Activated CD4-positive, alpha-beta memory T cell treated with anti-CD3 and anti-CD28 coated beads for 36 hours (primary cell): ENCODE measurements at regions of chrX and their contacts with region 1.

Region 1: GRCh38 chrX:25034889-25035288 is 19.1 kb upstream of the ARX start:
- DNase-seq: no peak
- H3K4me3 Mint-ChIP-seq: no peak overlapping the region
- H3K27ac Mint-ChIP-seq: no peak overlapping the region
- H3K4me1 Mint-ChIP-seq: no peaks in the 10 kb centered on the region
- H3K27me3 Mint-ChIP-seq: no peaks in the 10 kb centered on the region

Region 2: DNA sequence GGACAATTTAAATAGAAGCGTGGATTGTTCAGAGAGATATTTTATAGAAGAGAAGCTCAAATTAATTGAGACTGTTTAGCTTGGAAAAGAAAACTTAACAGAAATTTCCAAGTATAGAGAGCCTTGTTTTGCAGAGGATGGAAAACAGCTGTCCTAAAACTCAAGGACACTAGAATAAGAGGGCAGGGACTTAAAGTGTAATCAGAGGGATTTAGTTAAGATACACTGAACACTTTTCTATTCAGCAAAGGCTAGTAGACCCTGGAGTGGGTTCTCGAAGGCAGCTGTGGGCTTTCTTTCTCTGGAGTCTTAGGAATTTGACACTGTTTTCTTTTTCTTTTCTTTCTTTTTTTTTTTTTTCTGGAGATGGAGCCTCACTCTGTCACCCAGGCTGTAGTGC is 73.6 kb after region 1 on chrX:
- CTCF ChIA-PET with region 1: interaction called, 3 read pairs
- POLR2A ChIA-PET with region 1: no interaction called
- intact Hi-C with region 1: loop called (anchors 2 kb)
- DNase-seq: no peak
- H3K4me3 Mint-ChIP-seq: no peak overlapping the region
- H3K27ac Mint-ChIP-seq: no peak overlapping the region
- H3K4me1 Mint-ChIP-seq: no peaks in the 10 kb centered on the region
- H3K27me3 Mint-ChIP-seq: no peaks in the 10 kb centered on the region